RWPE1 (cell line): ENCODE measurements at regions of chr19 and their contacts with region 1.

Region 1: DNA sequence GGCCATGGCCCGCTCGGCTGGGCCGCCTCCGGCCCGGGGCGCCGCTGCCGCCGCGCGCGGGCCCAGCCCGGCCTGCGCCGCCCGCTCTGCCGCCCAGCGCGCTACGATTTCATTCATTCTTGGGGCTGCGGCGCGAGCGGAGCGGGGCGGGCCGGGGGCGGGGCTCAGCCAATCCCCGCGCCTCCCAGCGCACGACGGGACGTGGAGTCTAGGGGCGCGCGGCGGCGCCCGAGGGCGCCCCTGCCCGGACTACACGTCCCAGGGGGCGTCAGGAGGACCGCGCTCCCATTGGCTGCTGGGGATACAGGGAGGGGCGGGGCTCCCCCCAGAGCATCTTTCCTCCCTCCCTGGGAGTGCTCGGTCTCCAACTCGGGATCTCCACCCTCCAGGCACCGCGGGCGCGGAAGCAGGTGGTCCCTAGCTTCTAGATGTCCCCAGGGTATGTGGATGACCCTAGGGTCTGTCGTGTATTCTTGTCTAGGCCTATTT is 5.6 kb upstream of the DPF1 start:
- DNase-seq: peak; percentile 91
- H3K27ac ChIP-seq: peak overlapping the region; percentile 72; the same call in 1 of the 2 replicates
- CTCF ChIP-seq: no peak

Region 2: GRCh38 chr19:37943480-37943879 is 286.1 kb before region 1 on chr19:
- CTCF ChIA-PET with region 1: no interaction called
- POLR2A ChIA-PET with region 1: interaction called, 12 read pairs
- DNase-seq: no peak
- H3K27ac ChIP-seq: peak overlapping the region; percentile 26
- CTCF ChIP-seq: no peak

Region 3: DNA sequence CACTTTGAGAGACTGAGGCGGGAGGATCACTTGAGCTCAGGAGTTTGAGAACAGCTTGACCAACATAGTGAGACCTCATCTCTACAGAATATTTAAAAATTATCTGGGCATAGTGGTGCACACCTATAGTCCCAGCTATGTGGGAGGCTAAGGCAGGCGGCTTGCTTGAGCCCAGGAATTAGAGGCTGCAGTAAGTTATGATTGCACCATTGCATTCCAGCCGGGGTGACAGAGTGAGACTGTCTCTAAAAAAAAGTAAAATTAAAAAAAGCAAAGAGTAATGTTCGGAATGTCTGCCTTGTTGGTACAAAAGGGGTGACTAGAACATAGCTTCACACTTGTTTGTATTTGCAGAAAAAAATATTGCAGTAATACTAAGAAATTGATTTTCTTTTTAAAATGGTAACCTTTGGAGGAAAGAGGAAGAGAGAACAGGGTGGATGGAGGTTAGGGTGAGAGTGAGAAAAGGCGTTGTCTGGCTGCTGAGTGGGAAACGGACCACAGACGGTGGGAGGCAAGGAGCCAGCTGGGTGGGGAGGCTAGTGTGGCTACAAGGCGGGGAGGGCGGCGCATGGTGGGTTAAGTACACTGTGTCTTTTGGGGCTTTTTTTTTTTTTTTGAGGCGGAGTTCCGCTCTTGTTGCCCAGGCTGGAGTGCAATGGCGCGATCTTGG is 16.3 kb after region 1 on chr19:
- CTCF ChIA-PET with region 1: interaction called, 10 read pairs
- POLR2A ChIA-PET with region 1: no interaction called
- DNase-seq: no peak
- H3K27ac ChIP-seq: peak overlapping the region; percentile 46
- CTCF ChIP-seq: no peak

Region 4: GRCh38 chr19:38544034-38544958 is 314.7 kb after region 1 on chr19:
- CTCF ChIA-PET with region 1: no interaction called
- POLR2A ChIA-PET with region 1: no interaction called
- DNase-seq: peak; percentile 94
- H3K27ac ChIP-seq: peak overlapping the region; percentile 63
- CTCF ChIP-seq: peak; percentile 68